ENCODE measurements at regions of chr1 and their contacts with region 1.

Region 1: DNA sequence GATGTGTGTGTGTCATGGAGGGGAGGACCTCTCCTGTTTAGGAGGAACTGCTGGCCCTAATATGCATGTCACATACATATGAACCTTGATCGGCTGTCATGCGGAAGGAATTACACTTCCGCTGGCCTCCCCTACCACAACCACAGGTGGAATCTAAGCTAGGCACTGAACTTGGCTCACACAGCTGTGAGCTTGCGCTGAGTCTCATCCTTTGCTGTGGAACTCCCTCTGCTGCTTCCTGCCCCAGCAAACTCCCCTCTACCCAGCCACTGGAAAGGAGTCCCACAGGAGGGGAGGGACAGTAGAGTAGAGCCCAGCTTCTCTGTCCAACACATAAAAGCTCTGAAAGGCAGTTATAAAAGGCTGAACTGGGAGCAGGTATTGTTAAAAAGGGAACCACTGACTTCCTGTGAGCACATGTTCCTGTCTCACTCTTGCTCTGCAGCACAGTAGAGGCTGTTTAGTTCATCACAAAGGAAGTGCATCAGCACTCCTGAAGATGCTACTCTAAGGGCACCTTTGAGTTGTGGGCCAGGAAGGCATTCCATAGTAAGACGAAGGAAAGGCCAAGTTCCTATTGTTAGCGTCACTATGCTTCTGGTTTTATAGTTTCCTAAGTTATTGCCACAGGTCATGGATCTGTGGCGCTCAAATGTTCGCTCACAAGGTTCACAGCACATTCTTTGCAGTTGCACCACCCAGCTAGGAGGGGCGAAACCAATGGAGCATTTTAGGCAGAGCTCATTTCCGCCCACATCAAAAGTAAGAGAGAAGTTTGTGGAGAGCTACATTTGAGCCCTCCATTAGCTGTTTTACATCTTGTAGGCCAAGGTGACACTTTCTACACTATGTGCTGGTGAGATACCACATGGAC is 17.7 kb upstream of the PTPRC start:
- DNase-seq: peak; percentile 93
- ATAC-seq: peak; percentile 82
- H3K4me3 ChIP-seq: peak overlapping the region; percentile 50; the same call in 1 of the 2 replicates
- H3K27ac ChIP-seq: peak overlapping the region; percentile 93
- H3K4me1 ChIP-seq: peaks cover 47% of the 10 kb centered on the region
- H3K27me3 ChIP-seq: no peaks in the 10 kb centered on the region
- CTCF ChIP-seq: no peak
- EP300 ChIP-seq: peak; percentile 46 to 71; a peak in 2 of 4 replicates
- POLR2A ChIP-seq: peak; percentile 70
- RAD21 ChIP-seq: peak; percentile 20; the same call in 1 of the 2 replicates

Region 2: GRCh38 chr1:198268784-198269645 is 352.2 kb before region 1 on chr1:
- CTCF ChIA-PET with region 1: no interaction called
- POLR2A ChIA-PET with region 1: no interaction called
- RAD21 ChIA-PET with region 1: no interaction called
- SMC1A ChIA-PET with region 1: no interaction called
- in situ Hi-C with region 1: no loop called
- intact Hi-C with region 1: no loop called
- DNase-seq: no peak
- ATAC-seq: no peak
- H3K4me3 ChIP-seq: no peak overlapping the region
- H3K27ac ChIP-seq: no peak overlapping the region
- H3K4me1 ChIP-seq: no peaks in the 10 kb centered on the region
- H3K27me3 ChIP-seq: no peaks in the 10 kb centered on the region
- CTCF ChIP-seq: no peak
- EP300 ChIP-seq: no peak
- POLR2A ChIP-seq: no peak
- RAD21 ChIP-seq: no peak

Region 3: GRCh38 chr1:198520524-198521254 is 100.5 kb before region 1 on chr1:
- CTCF ChIA-PET with region 1: interaction called, 8 read pairs
- POLR2A ChIA-PET with region 1: interaction called, 5 read pairs
- RAD21 ChIA-PET with region 1: interaction called, 22 read pairs
- SMC1A ChIA-PET with region 1: interaction called, 29 read pairs
- in situ Hi-C with region 1: no loop called
- intact Hi-C with region 1: loop called (anchors 1 kb)
- DNase-seq: peak; percentile 55
- ATAC-seq: peak; percentile 91
- H3K4me3 ChIP-seq: no peak overlapping the region
- H3K27ac ChIP-seq: no peak overlapping the region
- H3K4me1 ChIP-seq: peaks cover 18% of the 10 kb centered on the region
- H3K27me3 ChIP-seq: no peaks in the 10 kb centered on the region; a peak in 1 of 4 replicates
- CTCF ChIP-seq: no peak
- EP300 ChIP-seq: peak in 1 of 2 experiments; percentile 71; a peak in 2 of 4 replicates
- POLR2A ChIP-seq: no peak
- RAD21 ChIP-seq: no peak

Region 4: GRCh38 chr1:198598796-198599321 is 22.3 kb before region 1 on chr1:
- CTCF ChIA-PET with region 1: interaction called, 45 read pairs
- POLR2A ChIA-PET with region 1: interaction called, 38 read pairs
- RAD21 ChIA-PET with region 1: interaction called, 150 read pairs
- SMC1A ChIA-PET with region 1: interaction called, 183 read pairs
- in situ Hi-C with region 1: no loop called
- intact Hi-C with region 1: loop called (anchors 1 kb)
- DNase-seq: peak; percentile 89
- ATAC-seq: peak; percentile 88
- H3K4me3 ChIP-seq: peak overlapping the region; percentile 24; the same call in 1 of the 2 replicates
- H3K27ac ChIP-seq: peak overlapping the region; percentile 81
- H3K4me1 ChIP-seq: peaks cover 27% of the 10 kb centered on the region
- H3K27me3 ChIP-seq: no peaks in the 10 kb centered on the region
- CTCF ChIP-seq: no peak
- EP300 ChIP-seq: peak; percentile 63 to 84; a peak in 3 of 4 replicates
- POLR2A ChIP-seq: no peak; the same call in 1 of the 2 replicates
- RAD21 ChIP-seq: no peak

Region 5: GRCh38 chr1:198633675-198634121 is 12.5 kb after region 1 on chr1:
- CTCF ChIA-PET with region 1: interaction called, 45 read pairs
- POLR2A ChIA-PET with region 1: interaction called, 106 read pairs
- RAD21 ChIA-PET with region 1: interaction called, 154 read pairs
- SMC1A ChIA-PET with region 1: interaction called, 251 read pairs
- in situ Hi-C with region 1: no loop called
- intact Hi-C with region 1: no loop called
- DNase-seq: no peak
- ATAC-seq: peak; percentile 28
- H3K4me3 ChIP-seq: no peak overlapping the region
- H3K27ac ChIP-seq: no peak overlapping the region
- H3K4me1 ChIP-seq: peaks cover 18% of the 10 kb centered on the region
- H3K27me3 ChIP-seq: no peaks in the 10 kb centered on the region
- CTCF ChIP-seq: no peak
- EP300 ChIP-seq: peak in 1 of 2 experiments; percentile 9; a peak in 1 of 4 replicates
- POLR2A ChIP-seq: no peak
- RAD21 ChIP-seq: no peak

Region 6: DNA sequence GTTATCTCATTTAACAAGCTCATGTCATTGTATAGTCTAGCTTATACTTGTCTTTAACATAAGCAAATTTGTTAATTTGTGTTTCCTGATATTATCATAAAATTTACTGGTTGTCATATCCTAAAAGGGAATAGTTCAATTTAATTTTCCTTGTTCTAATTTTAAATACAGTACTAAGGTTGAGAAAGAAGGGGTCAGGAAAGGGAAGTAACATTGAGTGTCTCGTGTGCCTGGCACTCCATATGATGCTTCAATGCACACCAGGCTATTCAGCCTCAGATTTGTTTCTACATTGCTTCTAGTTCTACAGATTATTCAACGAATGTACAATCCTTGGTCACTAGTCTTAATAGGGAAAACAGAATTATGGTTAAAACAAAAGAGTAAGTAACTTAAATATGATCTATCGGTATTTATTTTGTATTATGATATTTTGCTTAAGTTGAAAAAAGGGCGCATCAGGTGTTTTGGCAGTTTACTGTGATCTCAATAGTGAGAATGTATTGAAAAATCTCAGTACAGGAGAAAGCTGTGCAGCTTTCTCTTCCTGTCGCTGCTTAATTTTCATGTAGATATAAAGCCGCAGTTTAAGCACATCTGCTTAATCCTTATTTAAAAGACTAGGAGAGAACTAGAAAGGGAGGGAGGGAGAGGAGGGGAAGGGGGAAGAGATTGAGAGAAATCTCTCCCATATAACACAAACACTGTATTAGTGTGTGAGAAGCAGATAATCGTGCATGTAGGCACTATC is 30.6 kb after region 1 on chr1:
- CTCF ChIA-PET with region 1: interaction called, 7 read pairs
- POLR2A ChIA-PET with region 1: interaction called, 15 read pairs
- RAD21 ChIA-PET with region 1: interaction called, 35 read pairs
- SMC1A ChIA-PET with region 1: interaction called, 40 read pairs
- in situ Hi-C with region 1: no loop called
- intact Hi-C with region 1: no loop called
- DNase-seq: no peak
- ATAC-seq: peak; percentile 29
- H3K4me3 ChIP-seq: no peak overlapping the region
- H3K27ac ChIP-seq: peak overlapping the region; percentile 20; the same call in 1 of the 2 replicates
- H3K4me1 ChIP-seq: peaks cover 32% of the 10 kb centered on the region
- H3K27me3 ChIP-seq: no peaks in the 10 kb centered on the region
- CTCF ChIP-seq: no peak
- EP300 ChIP-seq: no peak
- POLR2A ChIP-seq: no peak
- RAD21 ChIP-seq: no peak

Region 7: DNA sequence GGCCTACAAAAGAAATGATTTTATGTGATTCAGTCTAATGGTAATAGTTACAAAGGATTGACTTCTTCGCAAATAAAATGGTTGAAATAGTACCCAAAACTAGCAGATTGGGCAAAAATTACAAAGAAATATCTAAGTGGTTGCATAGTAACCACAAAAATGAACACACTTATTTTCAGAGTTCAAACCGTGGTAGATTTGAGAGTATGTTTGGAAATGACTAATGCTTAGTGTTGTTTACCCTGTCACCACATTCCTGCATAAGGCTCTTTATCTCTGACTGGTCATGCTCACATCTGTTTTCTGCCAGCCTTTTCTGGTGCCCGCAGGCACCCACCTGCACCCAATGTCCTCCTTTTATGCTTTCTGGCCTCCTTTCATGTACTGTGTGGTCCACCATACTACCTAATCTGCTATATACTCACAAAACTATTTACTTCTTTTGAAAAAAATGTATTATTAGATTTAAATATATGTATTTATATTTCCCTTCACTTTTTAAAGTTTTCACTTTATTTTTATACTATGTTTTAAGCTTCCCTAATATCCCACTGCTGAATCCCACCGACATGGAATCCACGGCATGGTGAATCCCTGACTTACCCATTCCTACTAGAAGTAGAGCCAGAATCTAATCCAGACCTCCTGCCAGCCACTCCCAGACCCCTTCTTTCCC is 48.0 kb after region 1 on chr1:
- CTCF ChIA-PET with region 1: interaction called, 9 read pairs
- POLR2A ChIA-PET with region 1: interaction called, 3 read pairs
- RAD21 ChIA-PET with region 1: interaction called, 24 read pairs
- SMC1A ChIA-PET with region 1: interaction called, 80 read pairs
- in situ Hi-C with region 1: no loop called
- intact Hi-C with region 1: no loop called
- DNase-seq: peak; percentile 77
- ATAC-seq: peak; percentile 83
- H3K4me3 ChIP-seq: no peak overlapping the region
- H3K27ac ChIP-seq: peak overlapping the region; percentile 18; the same call in 1 of the 2 replicates
- H3K4me1 ChIP-seq: peaks cover 16% of the 10 kb centered on the region
- H3K27me3 ChIP-seq: no peaks in the 10 kb centered on the region
- CTCF ChIP-seq: no peak
- EP300 ChIP-seq: peak; percentile 27 to 67; a peak in 2 of 4 replicates
- POLR2A ChIP-seq: no peak
- RAD21 ChIP-seq: no peak

Region 8: GRCh38 chr1:199173356-199173755 is 552.2 kb after region 1 on chr1:
- CTCF ChIA-PET with region 1: no interaction called
- POLR2A ChIA-PET with region 1: no interaction called
- RAD21 ChIA-PET with region 1: interaction called, 4 read pairs
- SMC1A ChIA-PET with region 1: interaction called, 4 read pairs
- in situ Hi-C with region 1: no loop called
- intact Hi-C with region 1: loop called (anchors 10 kb)
- DNase-seq: peak; percentile 92
- ATAC-seq: peak; percentile 89
- H3K4me3 ChIP-seq: no peak overlapping the region
- H3K27ac ChIP-seq: peak overlapping the region; percentile 85
- H3K4me1 ChIP-seq: peaks cover 27% of the 10 kb centered on the region
- H3K27me3 ChIP-seq: no peaks in the 10 kb centered on the region
- CTCF ChIP-seq: no peak
- EP300 ChIP-seq: peak; percentile 94 to 95
- POLR2A ChIP-seq: no peak
- RAD21 ChIP-seq: peak; percentile 20; the same call in 1 of the 2 replicates